ENCODE measurements at regions of chr1 and their contacts with region 1.

Region 1: GRCh38 chr1:9270290-9270883 is 22.3 kb upstream of the SPSB1 start:
- DNase-seq: no peak
- H3K4me3 Mint-ChIP-seq: no peak overlapping the region
- H3K27ac Mint-ChIP-seq: no peak overlapping the region
- H3K4me1 Mint-ChIP-seq: peaks cover 22% of the 10 kb centered on the region
- H3K27me3 Mint-ChIP-seq: peaks cover 8% of the 10 kb centered on the region

Region 2: GRCh38 chr1:9110669-9111356 is 159.6 kb before region 1 on chr1:
- CTCF ChIA-PET with region 1: interaction called, 11 read pairs
- POLR2A ChIA-PET with region 1: no interaction called
- DNase-seq: peak; percentile 87
- H3K4me3 Mint-ChIP-seq: no peak overlapping the region
- H3K27ac Mint-ChIP-seq: no peak overlapping the region
- H3K4me1 Mint-ChIP-seq: peaks cover 28% of the 10 kb centered on the region
- H3K27me3 Mint-ChIP-seq: no peaks in the 10 kb centered on the region

Region 3: DNA sequence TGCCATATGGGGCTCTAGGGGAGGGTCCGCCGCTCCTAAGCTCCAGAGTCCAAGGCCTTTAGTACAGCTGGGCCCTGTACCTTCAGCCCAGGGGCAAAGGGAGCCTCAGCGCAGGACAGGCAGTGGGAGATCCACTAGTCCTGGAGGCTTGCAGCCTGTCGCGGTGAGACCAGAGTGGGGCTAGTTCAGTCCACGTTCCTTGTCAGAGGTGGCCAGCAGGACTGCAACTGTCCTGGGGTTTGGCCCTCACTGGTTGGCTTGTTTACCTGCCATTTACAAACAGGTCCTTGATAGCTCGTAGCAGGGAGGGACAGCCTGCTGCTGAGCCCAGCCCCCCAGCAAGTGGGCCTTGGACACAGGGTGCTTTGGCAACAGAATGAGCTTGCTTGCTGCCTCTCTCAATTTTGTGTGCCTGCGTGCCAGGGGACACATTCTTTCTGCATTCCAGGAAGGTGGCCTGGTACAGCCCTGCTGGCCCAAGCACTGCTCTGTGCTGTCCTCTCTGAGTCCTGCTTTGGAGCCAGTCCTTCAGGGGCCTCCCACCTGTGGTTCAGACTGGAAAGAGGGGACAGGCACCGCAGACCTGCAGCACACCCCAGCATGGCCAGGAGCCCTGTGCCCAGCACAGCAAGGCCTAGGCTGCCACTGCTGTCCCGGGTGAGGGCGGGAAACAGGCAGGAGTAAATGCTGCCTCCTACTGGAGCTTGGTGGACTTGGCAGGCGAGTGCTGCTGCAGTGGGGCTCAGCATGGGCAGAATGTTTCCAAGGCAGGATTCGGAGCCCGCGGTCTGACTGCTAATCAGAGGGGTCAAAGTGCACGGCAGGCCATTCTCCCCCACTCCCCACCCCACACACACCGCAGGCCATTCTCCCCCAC is 20.6 kb before region 1 on chr1:
- CTCF ChIA-PET with region 1: interaction called, 10 read pairs
- POLR2A ChIA-PET with region 1: no interaction called
- DNase-seq: peak; percentile 46
- H3K4me3 Mint-ChIP-seq: no peak overlapping the region
- H3K27ac Mint-ChIP-seq: no peak overlapping the region
- H3K4me1 Mint-ChIP-seq: peaks cover 6% of the 10 kb centered on the region
- H3K27me3 Mint-ChIP-seq: no peaks in the 10 kb centered on the region

Region 4: GRCh38 chr1:9281908-9282695 is 11.7 kb after region 1 on chr1:
- CTCF ChIA-PET with region 1: interaction called, 52 read pairs
- POLR2A ChIA-PET with region 1: interaction called, 16 read pairs
- DNase-seq: peak; percentile 41
- H3K4me3 Mint-ChIP-seq: no peak overlapping the region
- H3K27ac Mint-ChIP-seq: peak overlapping the region; percentile 96
- H3K4me1 Mint-ChIP-seq: peaks cover 85% of the 10 kb centered on the region
- H3K27me3 Mint-ChIP-seq: no peaks in the 10 kb centered on the region

Region 5: DNA sequence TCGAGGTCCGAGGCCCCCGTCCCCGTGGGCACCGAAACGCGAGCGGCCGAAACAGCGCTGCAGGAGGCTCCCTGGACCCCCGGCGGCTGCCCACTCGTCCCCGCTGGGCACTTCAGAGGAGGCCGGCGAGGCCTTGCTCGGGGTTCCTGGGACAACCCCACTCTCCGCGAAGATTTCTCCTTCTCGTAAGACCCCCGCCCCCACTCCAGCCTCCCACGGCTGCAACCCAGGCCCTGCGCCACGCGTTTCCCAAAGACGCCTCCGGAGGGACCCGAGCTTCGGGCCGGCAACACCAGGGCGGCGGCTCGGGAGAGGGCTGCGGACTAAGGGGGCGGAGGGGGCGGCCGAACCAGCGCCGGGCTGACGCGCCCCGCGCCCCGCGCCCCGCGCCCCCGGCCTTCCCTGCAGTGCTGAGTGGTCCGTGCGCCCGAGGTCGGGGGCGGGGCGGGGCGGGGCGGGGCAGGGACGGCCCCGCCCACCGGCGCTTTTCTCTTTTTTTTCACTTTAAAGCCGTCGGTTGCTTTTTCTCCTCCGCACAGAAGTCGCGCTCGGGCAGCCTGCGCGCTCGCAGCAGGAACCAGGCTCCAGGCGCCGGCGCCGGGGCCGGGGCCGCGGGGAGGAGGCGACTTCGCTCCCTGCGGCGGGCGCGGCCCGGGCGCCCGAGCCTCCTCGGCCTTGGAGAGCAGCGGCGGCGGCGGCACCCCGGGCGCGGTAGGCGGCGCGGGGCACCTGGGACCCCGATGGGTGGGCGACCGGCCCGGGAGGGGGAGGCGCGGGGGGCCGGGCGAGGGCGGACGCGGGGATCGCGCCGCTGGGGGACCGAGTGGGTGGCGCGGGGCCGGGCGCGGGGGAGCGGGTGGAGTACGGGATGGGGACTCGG is 22.2 kb after region 1 on chr1 and contains the start of gene SPSB1:
- CTCF ChIA-PET with region 1: interaction called, 52 read pairs
- POLR2A ChIA-PET with region 1: interaction called, 11 read pairs
- DNase-seq: peak; percentile 79
- H3K4me3 Mint-ChIP-seq: peak within 1 kb of the TSS; percentile 56
- H3K27ac Mint-ChIP-seq: no peak within 1 kb of the TSS
- H3K4me1 Mint-ChIP-seq: peaks cover 22% of the 10 kb centered on the region
- H3K27me3 Mint-ChIP-seq: peaks cover 7% of the 10 kb centered on the region
- total RNA-seq, gene SPSB1: 17.4 to 18.0 TPM

Region 6: GRCh38 chr1:9455487-9456234 is 185.3 kb after region 1 on chr1:
- CTCF ChIA-PET with region 1: interaction called, 60 read pairs
- POLR2A ChIA-PET with region 1: no interaction called
- DNase-seq: peak; percentile 66
- H3K4me3 Mint-ChIP-seq: no peak overlapping the region
- H3K27ac Mint-ChIP-seq: no peak overlapping the region
- H3K4me1 Mint-ChIP-seq: no peaks in the 10 kb centered on the region
- H3K27me3 Mint-ChIP-seq: peaks cover 25% of the 10 kb centered on the region

Region 7: GRCh38 chr1:9494929-9495758 is 224.8 kb after region 1 on chr1:
- CTCF ChIA-PET with region 1: interaction called, 48 read pairs
- POLR2A ChIA-PET with region 1: no interaction called
- DNase-seq: peak; percentile 69
- H3K4me3 Mint-ChIP-seq: peak overlapping the region; percentile 56
- H3K27ac Mint-ChIP-seq: no peak overlapping the region
- H3K4me1 Mint-ChIP-seq: peaks cover 17% of the 10 kb centered on the region
- H3K27me3 Mint-ChIP-seq: peaks cover 17% of the 10 kb centered on the region